Esophagus muscularis mucosa (tissue), 4 donors: ENCODE measurements at regions of chr10 and their contacts with region 1.

Region 1: GRCh38 chr10:31031558-31032257 is at the start of gene ZNF438:
- DNase-seq: peak; percentile 98
- H3K4me3 ChIP-seq: peak within 1 kb of the TSS; percentile 63 to 74 (median 72)
- H3K27ac ChIP-seq: peak within 1 kb of the TSS; percentile 97 to 100 (median 98)
- H3K4me1 ChIP-seq: peaks cover 22 to 50% (median 47%) of the 10 kb centered on the region in 4 donors
- H3K27me3 ChIP-seq: no peaks in the 10 kb centered on the region
- CTCF ChIP-seq: peak; percentile 47 to 61 (median 61)
- EP300 ChIP-seq: no peak
- POLR2A ChIP-seq: peak; percentile 88
- total RNA-seq, gene ZNF438: 11.0 to 11.6 (median 11.3) TPM

Region 2: GRCh38 chr10:30893208-30893607 is 138.5 kb before region 1 on chr10:
- intact Hi-C with region 1: no loop called
- DNase-seq: no peak
- H3K4me3 ChIP-seq: no peak overlapping the region
- H3K27ac ChIP-seq: no peak overlapping the region
- H3K4me1 ChIP-seq: no peaks in the 10 kb centered on the region
- H3K27me3 ChIP-seq: no peaks in the 10 kb centered on the region
- CTCF ChIP-seq: no peak
- EP300 ChIP-seq: no peak
- POLR2A ChIP-seq: no peak

Region 3: GRCh38 chr10:30980951-30981616 is 50.6 kb before region 1 on chr10:
- intact Hi-C with region 1: loop called (anchors 5 kb)
- DNase-seq: no peak
- H3K4me3 ChIP-seq: no peak overlapping the region
- H3K27ac ChIP-seq: peak overlapping the region; percentile 18 to 64 (median 52)
- H3K4me1 ChIP-seq: peaks cover 16 to 30% (median 27%) of the 10 kb centered on the region in 4 donors
- H3K27me3 ChIP-seq: no peaks in the 10 kb centered on the region
- CTCF ChIP-seq: no peak
- EP300 ChIP-seq: no peak
- POLR2A ChIP-seq: no peak

Region 4: DNA sequence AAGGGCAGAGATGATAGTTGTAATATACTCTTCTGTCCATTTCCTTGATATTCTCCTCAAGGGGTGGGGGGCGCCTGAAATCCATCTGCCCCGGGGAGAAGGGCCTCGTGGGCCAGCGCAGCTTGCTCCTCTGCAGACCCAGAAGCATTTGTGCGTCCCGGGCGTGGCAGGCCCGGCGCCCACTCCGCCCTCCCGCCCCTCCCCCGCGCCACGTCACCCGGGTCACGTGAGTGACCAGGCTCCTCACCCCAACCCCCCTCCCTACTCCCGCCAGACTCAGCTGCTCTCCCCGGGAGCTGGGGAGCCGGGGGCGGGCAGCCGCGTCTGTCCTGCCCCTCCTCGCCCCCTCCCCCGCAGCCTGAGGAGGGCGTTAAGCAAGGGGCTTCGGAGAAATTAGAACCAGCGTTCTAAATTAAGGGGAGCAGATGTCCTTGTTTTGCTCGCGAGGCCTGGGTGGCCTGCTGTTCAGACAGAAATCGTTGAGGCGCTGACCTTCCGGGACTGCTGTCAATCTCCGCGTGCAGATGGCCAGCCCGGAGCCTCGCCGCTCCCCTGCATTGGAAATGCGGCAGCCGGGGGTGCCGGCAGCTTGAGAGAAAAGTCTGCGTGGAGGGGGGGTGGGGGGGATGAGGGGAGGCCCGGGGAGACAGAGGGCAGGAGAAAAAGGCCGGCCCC is 102.1 kb after region 1 on chr10:
- intact Hi-C with region 1: loop called (anchors 10 kb)
- DNase-seq: peak; percentile 95
- H3K4me3 ChIP-seq: peak overlapping the region; percentile 56 to 62 (median 60)
- H3K27ac ChIP-seq: peak overlapping the region; percentile 78 to 88 (median 86)
- H3K4me1 ChIP-seq: peaks cover 23 to 47% (median 38%) of the 10 kb centered on the region in 4 donors
- H3K27me3 ChIP-seq: no peaks in the 10 kb centered on the region
- CTCF ChIP-seq: no peak
- EP300 ChIP-seq: no peak
- POLR2A ChIP-seq: peak; percentile 49